Heart left ventricle (tissue), 16 donors: ENCODE measurements at regions of chr4 and their contacts with region 1.

Region 1: DNA sequence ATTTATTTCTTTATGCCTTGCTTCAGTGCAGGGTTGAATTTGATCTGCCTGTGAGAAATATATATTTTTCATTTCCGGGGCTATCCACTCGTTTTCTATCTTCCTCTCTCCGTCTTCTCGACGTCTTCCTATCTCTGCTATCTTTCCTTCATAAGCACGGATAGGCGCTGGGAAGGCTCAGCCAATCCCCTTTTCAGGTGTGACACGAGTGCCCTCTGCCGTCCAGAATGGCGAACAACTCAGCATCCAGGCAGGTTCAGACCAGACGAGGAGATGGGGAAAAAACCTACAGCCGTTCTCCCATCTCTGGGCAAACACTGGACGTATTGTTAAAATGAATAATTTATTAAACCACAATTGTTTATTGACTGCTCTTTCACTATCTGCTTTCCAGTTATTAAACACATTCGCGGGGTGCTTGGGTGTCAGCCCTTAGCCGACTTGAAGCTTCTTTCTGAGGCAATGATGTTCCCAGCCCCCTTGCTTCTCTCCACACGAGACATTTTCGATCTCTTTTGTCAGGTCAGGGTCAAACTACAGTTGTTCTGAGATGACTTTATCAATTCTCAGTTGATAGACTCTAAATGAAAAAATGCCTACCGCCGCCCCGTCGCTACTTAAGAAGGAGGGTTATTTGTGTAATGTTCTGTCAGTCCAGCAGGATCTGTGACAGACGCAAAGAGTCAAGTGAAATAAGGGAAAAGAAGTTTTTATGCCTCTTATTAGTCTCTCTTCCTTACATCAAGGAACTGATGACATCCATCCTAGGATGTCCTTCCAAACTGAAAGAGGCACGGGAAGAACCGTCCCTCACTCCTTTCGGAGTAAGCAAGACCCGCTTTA is 96.3 kb upstream of the NOCT start:
- DNase-seq: peak; percentile 31 to 84 (median 57)
- ATAC-seq: peak; percentile 71 to 96 (median 88)
- H3K4me3 ChIP-seq: peak overlapping the region in 5 of 12 donors; percentile 11 to 24 (median 17)
- H3K27ac ChIP-seq: no peak overlapping the region
- H3K4me1 ChIP-seq: peaks cover 0 to 3% (median 0%) of the 10 kb centered on the region in 12 donors
- H3K27me3 ChIP-seq: no peaks in the 10 kb centered on the region
- CTCF ChIP-seq: peak in 11 of 12 donors; percentile 42 to 90 (median 76)
- POLR2A ChIP-seq: no peak

Region 2: GRCh38 chr4:138835832-138836533 is 83.3 kb before region 1 on chr4:
- intact Hi-C with region 1: loop called in 1 of 10 experiments (anchors 10 kb)
- DNase-seq: peak; percentile 60 to 89 (median 67)
- ATAC-seq: peak; percentile 77 to 95 (median 86)
- H3K4me3 ChIP-seq: no peak overlapping the region
- H3K27ac ChIP-seq: no peak overlapping the region
- H3K4me1 ChIP-seq: peaks cover 0 to 13% (median 0%) of the 10 kb centered on the region in 12 donors
- H3K27me3 ChIP-seq: no peaks in the 10 kb centered on the region
- CTCF ChIP-seq: peak in 3 of 12 donors; percentile 10 to 24 (median 11)
- POLR2A ChIP-seq: no peak